Endothelial cell of umbilical vein (primary cell): ENCODE measurements at regions of chr19 and their contacts with region 1.

Region 1: GRCh38 chr19:49200238-49200862 is 42.8 kb downstream of the TRPM4 start:
- DNase-seq: no peak
- H3K4me3 ChIP-seq: no peak overlapping the region
- H3K27ac ChIP-seq: no peak overlapping the region
- H3K4me1 ChIP-seq: peaks cover 9% of the 10 kb centered on the region
- H3K27me3 ChIP-seq: no peaks in the 10 kb centered on the region
- CTCF ChIP-seq: no peak
- POLR2A ChIP-seq: no peak

Region 2: GRCh38 chr19:49097455-49098288 is 102.7 kb before region 1 on chr19:
- CTCF ChIA-PET with region 1: interaction called, 164 read pairs
- POLR2A ChIA-PET with region 1: interaction called, 5 read pairs
- dilution Hi-C with region 1: no loop called
- intact Hi-C with region 1: loop called (anchors 1 kb)
- DNase-seq: peak; percentile 74
- H3K4me3 ChIP-seq: no peak overlapping the region
- H3K27ac ChIP-seq: no peak overlapping the region
- H3K4me1 ChIP-seq: no peaks in the 10 kb centered on the region
- H3K27me3 ChIP-seq: no peaks in the 10 kb centered on the region
- CTCF ChIP-seq: peak; percentile 96 to 98
- POLR2A ChIP-seq: no peak

Region 3: DNA sequence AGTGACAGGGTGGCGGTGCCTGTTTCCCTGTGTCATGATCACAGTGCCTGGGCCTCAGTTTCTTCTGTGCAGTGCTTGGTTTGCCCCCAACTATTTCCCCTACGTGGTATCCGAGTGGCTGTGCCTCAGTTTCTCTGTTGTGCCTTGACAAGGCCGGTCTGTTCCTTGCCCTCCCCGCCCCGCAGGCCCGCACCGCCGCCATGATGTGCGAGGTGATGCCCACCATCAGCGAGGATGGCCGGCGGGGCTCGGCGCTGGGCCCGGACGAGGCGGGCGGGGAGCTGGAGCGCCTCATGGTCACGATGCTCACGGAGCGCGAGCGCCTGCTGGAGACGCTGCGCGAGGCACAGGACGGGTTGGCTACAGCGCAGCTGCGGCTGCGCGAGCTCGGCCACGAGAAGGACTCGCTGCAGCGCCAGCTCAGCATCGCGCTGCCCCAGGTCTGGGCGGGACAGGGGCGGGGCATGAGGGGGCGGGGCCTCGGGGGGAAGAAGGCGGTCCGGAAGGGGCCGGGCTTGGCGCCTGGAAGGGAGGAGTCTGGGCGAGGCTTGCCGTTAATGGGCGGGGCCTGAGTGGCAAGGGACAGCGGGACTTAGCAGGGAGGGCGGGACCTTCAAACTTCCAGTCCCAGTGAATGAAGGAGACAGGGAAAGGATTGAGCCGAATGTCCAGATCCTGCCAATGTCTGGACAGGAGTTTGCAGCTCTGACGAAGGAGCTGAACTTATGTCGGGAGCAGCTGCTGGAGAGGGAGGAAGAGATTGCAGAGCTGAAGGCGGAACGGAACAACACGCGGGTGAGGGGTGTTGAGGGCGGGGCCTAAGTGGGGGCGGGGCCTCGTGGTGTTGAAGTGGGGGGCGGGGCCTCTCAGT is 72.4 kb before region 1 on chr19:
- CTCF ChIA-PET with region 1: interaction called, 14 read pairs
- POLR2A ChIA-PET with region 1: interaction called, 3 read pairs
- dilution Hi-C with region 1: no loop called
- intact Hi-C with region 1: no loop called
- DNase-seq: peak; percentile 98
- H3K4me3 ChIP-seq: no peak overlapping the region
- H3K27ac ChIP-seq: no peak overlapping the region
- H3K4me1 ChIP-seq: no peaks in the 10 kb centered on the region
- H3K27me3 ChIP-seq: peaks cover 0 to 4% of the 10 kb centered on the region in 2 experiments
- CTCF ChIP-seq: peak in 1 of 2 donors; percentile 38
- POLR2A ChIP-seq: no peak

Region 4: DNA sequence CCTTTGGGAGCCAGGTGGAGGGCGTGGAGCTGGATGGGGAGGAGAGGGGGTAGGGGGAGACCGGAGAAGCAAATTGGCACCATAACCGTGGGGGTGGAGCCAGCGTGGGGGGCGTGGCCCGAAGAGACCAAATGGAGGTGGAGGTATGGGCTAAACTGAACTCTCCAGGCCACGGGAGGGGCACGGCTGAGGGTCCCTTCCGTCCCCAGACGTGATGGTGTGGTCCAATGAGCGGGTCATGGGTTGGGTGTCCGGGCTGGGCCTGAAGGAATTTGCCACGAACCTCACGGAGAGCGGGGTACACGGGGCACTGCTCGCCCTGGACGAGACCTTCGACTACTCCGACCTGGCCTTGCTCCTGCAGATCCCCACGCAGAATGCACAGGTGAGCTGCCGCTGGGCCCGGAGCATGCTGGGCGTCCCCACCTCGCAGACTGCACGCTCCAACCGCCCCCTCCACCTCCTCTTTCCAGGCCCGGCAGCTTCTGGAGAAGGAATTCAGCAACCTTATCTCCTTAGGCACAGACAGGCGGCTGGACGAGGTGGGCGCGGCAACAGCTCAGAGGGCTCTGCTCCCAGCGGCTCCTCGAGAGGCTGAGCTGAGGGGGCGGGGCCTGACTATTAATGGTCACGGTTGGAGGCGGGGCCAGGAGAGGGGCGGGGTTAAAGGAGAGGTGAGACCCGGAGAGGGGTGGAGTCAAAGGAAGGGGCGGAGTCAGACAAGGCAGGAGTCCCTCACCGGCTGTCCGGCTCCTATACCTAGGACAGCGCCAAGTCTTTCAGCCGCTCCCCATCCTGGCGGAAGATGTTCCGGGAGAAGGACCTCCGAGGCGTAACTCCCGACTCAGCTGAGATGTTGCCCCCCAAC is 51.3 kb before region 1 on chr19:
- CTCF ChIA-PET with region 1: interaction called, 56 read pairs
- POLR2A ChIA-PET with region 1: no interaction called
- dilution Hi-C with region 1: no loop called
- intact Hi-C with region 1: loop called (anchors 2 kb)
- DNase-seq: peak; percentile 91
- H3K4me3 ChIP-seq: peak overlapping the region; percentile 31 to 73 (median 61)
- H3K27ac ChIP-seq: no peak overlapping the region
- H3K4me1 ChIP-seq: peaks cover 28% of the 10 kb centered on the region
- H3K27me3 ChIP-seq: peaks cover 2 to 5% of the 10 kb centered on the region in 2 experiments
- CTCF ChIP-seq: no peak
- POLR2A ChIP-seq: no peak

Region 5: DNA sequence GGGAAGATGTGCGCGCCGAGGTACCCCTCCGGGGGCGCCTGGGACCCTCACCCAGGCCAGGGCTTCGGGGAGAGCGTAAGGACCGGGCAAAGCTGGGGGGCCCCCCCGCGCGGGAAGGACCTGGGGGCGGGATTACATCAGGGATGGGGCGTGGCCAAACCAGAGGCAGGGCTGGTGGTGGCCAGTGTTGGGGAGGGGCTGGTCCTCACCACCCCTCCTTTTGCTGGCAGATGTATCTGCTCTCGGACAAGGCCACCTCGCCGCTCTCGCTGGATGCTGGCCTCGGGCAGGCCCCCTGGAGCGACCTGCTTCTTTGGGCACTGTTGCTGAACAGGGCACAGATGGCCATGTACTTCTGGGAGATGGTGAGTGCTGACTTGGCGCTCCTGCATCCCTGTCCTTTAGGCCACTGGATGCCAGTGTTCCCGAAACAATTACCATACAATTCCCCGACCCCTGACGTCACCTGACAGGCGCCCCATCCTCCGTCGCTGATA is 17.5 kb before region 1 on chr19:
- CTCF ChIA-PET with region 1: interaction called, 71 read pairs
- POLR2A ChIA-PET with region 1: interaction called, 3 read pairs
- dilution Hi-C with region 1: no loop called
- intact Hi-C with region 1: no loop called
- DNase-seq: no peak
- H3K4me3 ChIP-seq: no peak overlapping the region
- H3K27ac ChIP-seq: no peak overlapping the region
- H3K4me1 ChIP-seq: no peaks in the 10 kb centered on the region
- H3K27me3 ChIP-seq: no peaks in the 10 kb centered on the region
- CTCF ChIP-seq: no peak
- POLR2A ChIP-seq: no peak

Region 6: DNA sequence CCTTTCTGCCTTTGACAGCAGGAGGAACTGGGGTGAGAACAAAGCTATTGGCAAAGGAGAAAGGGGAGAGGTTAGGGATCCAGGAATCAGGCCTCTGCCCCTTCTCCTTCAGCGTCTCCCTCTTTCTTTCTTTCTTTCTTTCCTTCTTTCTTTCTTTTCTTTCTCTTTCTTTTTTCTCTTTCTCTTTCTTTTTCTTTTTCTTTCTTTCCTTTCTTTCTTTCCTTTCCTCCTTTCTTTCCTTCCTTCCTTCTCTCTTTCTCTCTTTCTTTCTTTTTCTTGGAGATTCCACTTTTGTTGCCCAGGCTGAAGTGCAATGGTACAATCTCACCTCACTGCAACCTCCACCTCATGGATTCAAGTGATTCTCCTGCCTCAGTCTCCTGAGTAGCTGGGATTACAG is 32.8 kb after region 1 on chr19:
- CTCF ChIA-PET with region 1: no interaction called
- POLR2A ChIA-PET with region 1: no interaction called
- dilution Hi-C with region 1: no loop called
- intact Hi-C with region 1: no loop called
- DNase-seq: no peak
- H3K4me3 ChIP-seq: no peak overlapping the region
- H3K27ac ChIP-seq: no peak overlapping the region
- H3K4me1 ChIP-seq: no peaks in the 10 kb centered on the region
- H3K27me3 ChIP-seq: peaks cover 0 to 7% of the 10 kb centered on the region in 2 experiments
- CTCF ChIP-seq: no peak
- POLR2A ChIP-seq: no peak